Activated B cell treated with CpG ODN at 0.5 μM for 24 hours (primary cell): ENCODE measurements at regions of chr3 and their contacts with region 1.

Region 1: GRCh38 chr3:24582431-24583403 is 88.1 kb upstream of the THRB start:
- DNase-seq: no peak
- ATAC-seq: no peak
- H3K4me3 Mint-ChIP-seq: no peak overlapping the region
- H3K27ac Mint-ChIP-seq: no peak overlapping the region
- H3K4me1 Mint-ChIP-seq: no peaks in the 10 kb centered on the region
- H3K27me3 Mint-ChIP-seq: peaks cover 11% of the 10 kb centered on the region
- CTCF ChIP-seq: no peak

Region 2: GRCh38 chr3:24264748-24265158 is 318.0 kb before region 1 on chr3:
- CTCF ChIA-PET with region 1: interaction called, 4 read pairs
- POLR2A ChIA-PET with region 1: no interaction called
- intact Hi-C with region 1: loop called (anchors 1 kb)
- DNase-seq: no peak
- ATAC-seq: peak; percentile 49
- H3K4me3 Mint-ChIP-seq: no peak overlapping the region
- H3K27ac Mint-ChIP-seq: no peak overlapping the region
- H3K4me1 Mint-ChIP-seq: no peaks in the 10 kb centered on the region
- H3K27me3 Mint-ChIP-seq: peaks cover 6% of the 10 kb centered on the region
- CTCF ChIP-seq: peak; percentile 59

Region 3: GRCh38 chr3:24377218-24377993 is 205.3 kb before region 1 on chr3:
- CTCF ChIA-PET with region 1: no interaction called
- POLR2A ChIA-PET with region 1: no interaction called
- intact Hi-C with region 1: loop called (anchors 10 kb)
- DNase-seq: no peak
- ATAC-seq: no peak
- H3K4me3 Mint-ChIP-seq: no peak overlapping the region
- H3K27ac Mint-ChIP-seq: no peak overlapping the region
- H3K4me1 Mint-ChIP-seq: no peaks in the 10 kb centered on the region
- H3K27me3 Mint-ChIP-seq: peaks cover 2% of the 10 kb centered on the region
- CTCF ChIP-seq: no peak

Region 4: GRCh38 chr3:24622138-24622537 is 39.4 kb after region 1 on chr3:
- CTCF ChIA-PET with region 1: no interaction called
- POLR2A ChIA-PET with region 1: no interaction called
- intact Hi-C with region 1: no loop called
- DNase-seq: no peak
- ATAC-seq: no peak
- H3K4me3 Mint-ChIP-seq: no peak overlapping the region
- H3K27ac Mint-ChIP-seq: no peak overlapping the region
- H3K4me1 Mint-ChIP-seq: no peaks in the 10 kb centered on the region
- H3K27me3 Mint-ChIP-seq: peaks cover 7% of the 10 kb centered on the region
- CTCF ChIP-seq: no peak